Activated CD4-positive, alpha-beta T cell treated with anti-CD3 and anti-CD28 coated beads, Interleukin-2, amount 10 ng/mL, durations not matched to agents 24 days and 14 days (primary cell): ENCODE measurements at regions of chr2 and their contacts with region 1.

Region 1: DNA sequence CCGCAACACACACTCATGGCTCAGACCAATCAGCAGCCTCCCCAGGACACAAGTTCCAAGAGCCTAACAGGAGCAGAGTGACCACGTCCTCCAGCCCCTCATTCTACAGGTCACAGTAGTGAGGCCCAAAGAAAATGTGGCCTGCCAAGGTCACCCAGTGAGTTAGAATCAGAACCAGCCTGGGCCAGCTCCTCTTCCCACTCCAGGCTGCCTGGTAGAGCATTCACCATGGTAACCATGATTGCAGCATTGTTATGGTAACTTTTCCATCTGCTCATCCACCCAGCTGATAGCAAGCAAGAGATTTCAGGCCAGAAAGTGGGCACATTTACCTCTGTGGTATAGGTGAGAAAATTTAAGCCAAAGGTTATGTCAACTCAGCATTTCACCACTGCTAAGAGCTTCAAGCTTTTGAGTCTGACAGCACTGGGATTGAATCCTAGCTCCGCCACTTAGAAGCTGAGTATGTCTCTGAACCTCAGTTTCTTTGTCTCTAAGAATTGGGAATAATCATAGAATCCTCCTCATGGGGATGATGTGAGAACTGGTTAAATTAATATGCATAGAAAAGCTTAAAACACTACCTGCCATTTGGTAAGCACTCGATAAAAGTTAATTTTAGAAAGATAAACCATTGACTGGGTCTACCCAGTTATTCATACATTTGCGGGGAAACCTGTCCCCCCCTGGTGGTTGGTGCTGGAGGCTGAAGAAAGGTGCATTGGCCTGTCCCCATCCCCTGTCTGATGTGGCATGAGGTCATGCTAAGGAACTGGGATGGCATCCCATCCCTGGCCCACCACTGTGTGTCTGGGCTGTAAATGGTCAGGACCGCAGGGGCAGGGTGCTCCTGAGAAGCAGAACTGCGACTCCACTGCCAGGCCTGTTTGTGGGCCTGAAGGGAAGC is 181.5 kb downstream of the KLHL29 start:
- DNase-seq: peak; percentile 77
- H3K4me3 Mint-ChIP-seq: no peak overlapping the region
- H3K27ac Mint-ChIP-seq: no peak overlapping the region
- H3K4me1 Mint-ChIP-seq: no peaks in the 10 kb centered on the region
- H3K27me3 Mint-ChIP-seq: peaks cover 2% of the 10 kb centered on the region

Region 2: DNA sequence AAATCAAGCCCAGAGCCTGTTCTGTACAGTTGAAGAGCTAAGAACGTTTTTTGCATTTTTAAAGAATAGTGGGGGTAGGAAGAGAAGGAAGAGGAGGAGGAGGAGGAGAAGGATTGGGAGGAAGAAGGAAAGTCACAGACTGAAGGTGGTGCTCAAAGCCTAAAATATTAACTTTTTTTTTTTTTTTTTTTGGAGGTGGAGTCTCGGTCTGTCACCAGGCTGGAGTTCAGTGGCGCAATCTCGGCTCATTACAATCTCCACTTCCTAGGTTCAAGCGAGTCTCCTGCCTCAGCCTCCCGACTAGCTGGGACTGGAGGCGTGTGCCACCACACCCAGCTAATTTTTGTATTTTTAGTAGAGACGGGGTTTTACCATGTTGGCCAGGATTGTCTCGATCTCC is 199.8 kb before region 1 on chr2:
- intact Hi-C with region 1: loop called (anchors 5 kb)
- DNase-seq: no peak
- H3K4me3 Mint-ChIP-seq: no peak overlapping the region
- H3K27ac Mint-ChIP-seq: no peak overlapping the region
- H3K4me1 Mint-ChIP-seq: no peaks in the 10 kb centered on the region
- H3K27me3 Mint-ChIP-seq: peaks cover 48% of the 10 kb centered on the region